ENCODE measurements at regions of chr15 and their contacts with region 1.

Region 1: DNA sequence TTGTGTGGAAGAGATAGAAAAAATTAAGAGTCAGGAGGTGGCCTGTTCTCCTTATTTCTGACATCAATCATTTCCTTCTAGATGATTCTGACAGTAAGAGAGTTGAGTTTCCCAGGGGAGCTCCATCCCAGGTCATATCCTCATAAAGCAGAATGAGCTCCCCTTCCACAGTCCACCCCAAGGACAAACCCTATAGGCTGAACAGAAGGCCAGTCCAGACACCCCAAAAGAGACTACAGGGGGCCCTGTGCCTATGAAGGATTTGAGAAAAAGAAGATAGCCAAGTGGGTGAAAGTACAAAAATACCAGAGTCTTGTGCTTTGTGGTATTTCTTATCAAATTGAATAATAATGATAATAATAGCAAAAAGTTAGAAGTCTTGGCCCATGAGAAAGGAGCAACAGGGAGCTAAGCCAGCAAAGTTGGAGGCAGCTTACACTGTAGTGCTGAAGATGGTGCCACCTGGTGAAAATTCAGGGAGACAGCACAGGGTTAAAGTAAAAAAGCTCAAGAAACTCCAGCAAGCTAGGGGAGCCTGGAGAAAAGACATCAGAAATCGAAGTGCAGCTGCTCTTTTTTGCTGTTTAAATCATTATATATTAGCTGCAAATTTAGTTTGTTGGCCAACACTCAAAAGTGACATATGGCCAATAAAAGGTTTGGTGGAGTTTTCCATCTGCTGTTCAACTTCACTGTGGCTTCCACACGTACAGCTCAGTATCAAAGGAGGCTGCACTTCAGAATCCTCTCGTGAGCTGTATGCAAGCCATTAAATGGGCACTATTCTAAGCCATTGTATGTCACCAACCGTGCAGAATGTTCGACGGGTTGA is 35.8 kb upstream of the SLC24A5 start:
- DNase-seq: peak; percentile 24
- CTCF ChIP-seq: peak; percentile 52

Region 2: DNA sequence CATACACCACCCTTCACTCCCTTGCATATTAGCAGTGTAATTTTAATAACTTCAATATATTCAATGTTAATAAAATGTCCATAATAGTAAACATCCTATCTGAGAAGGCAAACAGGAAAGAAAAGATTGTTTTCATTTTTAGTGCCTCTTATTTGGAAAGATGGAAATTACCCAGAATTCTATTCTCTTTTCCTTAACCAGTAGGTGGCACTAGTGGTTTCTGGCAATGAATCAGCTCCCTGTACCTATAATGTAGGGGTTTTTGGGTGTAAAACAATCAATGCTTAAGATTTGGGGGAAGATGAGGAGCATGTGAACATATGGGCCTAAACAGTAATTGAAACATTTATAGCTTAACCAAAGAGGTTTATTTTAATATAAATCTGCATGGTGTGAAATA is 373.3 kb before region 1 on chr15:
- CTCF ChIA-PET with region 1: interaction called, 17 read pairs
- POLR2A ChIA-PET with region 1: no interaction called
- DNase-seq: peak; percentile 37
- CTCF ChIP-seq: peak; percentile 52

Region 3: GRCh38 chr15:48062148-48062861 is 22.7 kb before region 1 on chr15:
- CTCF ChIA-PET with region 1: interaction called, 14 read pairs
- POLR2A ChIA-PET with region 1: no interaction called
- DNase-seq: no peak
- CTCF ChIP-seq: no peak

Region 4: DNA sequence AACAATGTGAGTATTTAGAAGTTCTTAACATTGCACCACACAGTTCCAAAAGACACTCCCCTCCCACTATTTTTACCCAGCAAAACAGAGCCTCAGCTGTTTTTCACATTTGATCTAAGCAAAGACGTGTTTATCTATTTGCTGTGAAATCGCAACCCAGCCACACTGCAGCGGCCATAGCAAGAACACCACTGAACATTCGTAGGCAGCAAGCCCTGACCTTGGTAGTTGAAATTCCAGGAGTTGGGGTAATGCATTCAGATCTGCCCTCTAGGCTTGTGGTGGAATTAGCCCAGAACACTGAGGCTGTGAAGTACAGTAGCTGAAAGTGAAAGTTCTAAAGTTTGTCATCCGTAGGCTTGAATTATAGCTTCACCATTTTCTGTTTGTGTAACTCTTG is 18.7 kb after region 1 on chr15:
- CTCF ChIA-PET with region 1: interaction called, 10 read pairs
- POLR2A ChIA-PET with region 1: no interaction called
- DNase-seq: no peak
- CTCF ChIP-seq: no peak

Region 5: DNA sequence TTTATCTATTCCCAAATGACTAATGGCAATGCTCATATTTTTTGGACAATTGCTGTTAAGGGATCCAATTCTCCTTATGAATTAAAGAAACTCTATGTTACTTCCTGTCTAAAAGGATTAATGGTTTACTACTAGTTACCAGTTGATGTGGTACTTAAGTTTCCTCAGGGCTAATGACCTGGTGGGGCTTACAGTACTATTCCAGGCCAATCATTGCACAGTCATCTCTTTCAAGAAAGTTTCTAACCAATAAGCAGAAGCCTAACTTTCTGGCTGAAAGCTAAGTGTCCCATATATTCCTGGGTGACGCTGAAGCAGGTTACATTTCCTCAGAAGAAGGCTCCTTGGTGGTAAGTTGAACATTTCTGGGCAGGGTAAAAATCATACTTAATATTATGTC is 121.0 kb after region 1 on chr15 and contains the start of gene SLC12A1:
- CTCF ChIA-PET with region 1: no interaction called
- POLR2A ChIA-PET with region 1: no interaction called
- DNase-seq: no peak
- CTCF ChIP-seq: no peak